PC-9 (cell line): ENCODE measurements at regions of chr16 and their contacts with region 1.

Region 1: DNA sequence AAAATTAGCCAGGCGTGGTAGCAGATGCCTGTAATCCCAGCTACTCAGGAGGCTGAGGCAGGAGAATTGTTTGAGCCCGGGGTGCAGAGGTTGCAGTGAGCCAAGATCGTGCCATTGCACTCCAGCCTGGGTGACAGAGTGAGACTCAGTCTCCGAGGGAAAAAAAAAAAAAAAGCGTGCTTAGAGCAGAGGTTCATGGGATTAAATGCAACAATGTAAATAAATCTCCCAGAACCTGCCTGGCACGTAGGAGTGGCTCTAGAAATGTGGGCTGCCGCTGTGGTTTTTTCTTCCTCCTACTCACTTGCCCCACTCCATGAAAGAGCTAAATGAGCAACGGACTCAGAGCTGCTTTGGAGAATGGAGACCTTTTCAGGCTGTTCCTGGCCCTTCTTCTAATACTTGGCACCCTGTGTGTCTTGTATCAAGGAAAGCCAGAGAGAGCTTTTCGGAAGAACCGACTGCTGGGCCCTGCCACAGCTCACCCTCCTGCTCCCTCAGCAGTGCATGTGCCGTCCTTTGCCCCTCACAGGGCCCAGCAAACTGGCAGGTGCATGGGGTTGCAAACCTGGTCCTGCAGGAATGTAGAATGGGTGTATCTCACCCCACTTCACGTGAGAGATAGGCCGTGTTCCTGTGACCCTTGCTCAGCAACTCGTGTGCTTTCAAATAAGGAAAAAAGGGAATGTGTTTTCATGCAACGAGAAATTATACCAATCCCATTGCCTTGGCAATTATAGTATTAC is 52.0 kb downstream of the LDHD start:
- DNase-seq: peak; percentile 63 to 91
- H3K4me3 ChIP-seq: peak overlapping the region; percentile 52
- H3K27ac ChIP-seq: peak overlapping the region; percentile 86
- H3K4me1 ChIP-seq: peaks cover 72% of the 10 kb centered on the region
- H3K27me3 ChIP-seq: no peaks in the 10 kb centered on the region
- CTCF ChIP-seq: no peak

Region 2: GRCh38 chr16:74998481-74999218 is 65.9 kb before region 1 on chr16 and contains the start of gene ZNRF1:
- CTCF ChIA-PET with region 1: interaction called, 8 read pairs
- POLR2A ChIA-PET with region 1: no interaction called
- intact Hi-C with region 1: loop called (anchors 1 kb)
- DNase-seq: peak; percentile 82 to 87
- H3K4me3 ChIP-seq: peak within 1 kb of the TSS; percentile 74
- H3K27ac ChIP-seq: peak within 1 kb of the TSS; percentile 86
- H3K4me1 ChIP-seq: peaks cover 52% of the 10 kb centered on the region
- H3K27me3 ChIP-seq: no peaks in the 10 kb centered on the region
- CTCF ChIP-seq: peak; percentile 94
- total RNA-seq, gene ZNRF1: 64.4 and 79.3 TPM in 2 replicates

Region 3: DNA sequence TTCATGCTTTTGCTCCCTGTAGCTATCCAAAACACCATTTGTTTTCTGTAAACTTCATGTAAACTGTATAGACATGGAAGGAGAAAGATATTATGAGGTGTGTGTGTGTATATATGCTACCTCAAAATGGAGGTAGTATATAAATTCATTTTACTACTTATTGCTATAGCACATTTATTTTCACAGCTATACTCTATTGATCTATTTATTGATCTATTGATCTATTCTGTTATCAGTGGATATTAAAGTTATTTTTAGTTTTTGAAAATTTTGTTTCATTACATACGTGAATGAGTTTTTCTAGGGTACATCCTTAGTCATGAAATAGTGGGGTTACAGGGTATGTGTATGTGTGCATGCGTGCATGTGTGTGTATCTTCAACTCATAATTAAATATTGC is 50.3 kb before region 1 on chr16:
- CTCF ChIA-PET with region 1: no interaction called
- POLR2A ChIA-PET with region 1: no interaction called
- intact Hi-C with region 1: no loop called
- DNase-seq: no peak
- H3K4me3 ChIP-seq: no peak overlapping the region
- H3K27ac ChIP-seq: no peak overlapping the region
- H3K4me1 ChIP-seq: peaks cover 67% of the 10 kb centered on the region
- H3K27me3 ChIP-seq: no peaks in the 10 kb centered on the region
- CTCF ChIP-seq: no peak

Region 4: GRCh38 chr16:75029557-75030253 is 34.9 kb before region 1 on chr16:
- CTCF ChIA-PET with region 1: interaction called, 4 read pairs
- POLR2A ChIA-PET with region 1: interaction called, 11 read pairs
- intact Hi-C with region 1: no loop called
- DNase-seq: peak; percentile 65 to 91
- H3K4me3 ChIP-seq: no peak overlapping the region
- H3K27ac ChIP-seq: peak overlapping the region; percentile 71
- H3K4me1 ChIP-seq: peaks cover 66% of the 10 kb centered on the region
- H3K27me3 ChIP-seq: no peaks in the 10 kb centered on the region
- CTCF ChIP-seq: no peak

Region 5: DNA sequence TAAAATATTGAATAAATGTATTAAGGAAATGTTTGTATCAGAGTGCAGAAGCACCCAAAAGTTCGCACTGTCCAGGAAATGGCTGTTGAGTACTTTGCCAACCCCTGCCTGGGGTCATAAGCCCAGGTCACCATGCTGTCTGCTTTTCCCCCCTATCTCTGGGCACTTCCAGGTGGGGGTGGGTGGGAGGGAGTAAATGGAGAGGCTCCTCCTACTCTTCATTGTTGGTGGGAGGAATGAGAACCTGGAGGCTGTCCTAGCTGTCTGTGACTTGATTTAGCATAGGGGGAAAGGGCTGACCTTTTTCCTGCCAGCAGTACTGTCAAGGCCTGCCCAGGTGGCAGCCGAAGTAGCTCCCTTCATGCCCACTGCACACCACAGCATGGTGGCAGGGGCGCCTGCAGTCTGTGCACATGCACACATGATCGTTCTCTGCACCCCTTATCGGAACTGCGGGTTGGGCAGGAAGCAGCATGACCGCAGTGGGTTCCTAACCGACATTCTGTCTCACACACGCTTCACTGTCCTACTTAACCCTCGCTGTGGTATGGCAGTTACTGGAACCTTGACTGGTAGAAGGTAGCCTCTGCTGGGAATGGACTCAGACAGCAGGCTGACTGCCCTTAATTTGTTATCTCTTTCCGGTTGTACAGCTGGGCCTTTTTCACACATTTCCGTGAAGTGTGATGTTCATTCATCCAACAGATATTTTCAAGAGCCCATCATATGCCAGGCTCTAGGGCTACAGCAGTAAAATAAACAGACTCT is 10.5 kb after region 1 on chr16:
- CTCF ChIA-PET with region 1: interaction called, 12 read pairs
- POLR2A ChIA-PET with region 1: interaction called, 12 read pairs
- intact Hi-C with region 1: no loop called
- DNase-seq: no peak
- H3K4me3 ChIP-seq: no peak overlapping the region
- H3K27ac ChIP-seq: no peak overlapping the region
- H3K4me1 ChIP-seq: peaks cover 8% of the 10 kb centered on the region
- H3K27me3 ChIP-seq: no peaks in the 10 kb centered on the region
- CTCF ChIP-seq: no peak

Region 6: GRCh38 chr16:75086281-75086680 is 21.7 kb after region 1 on chr16:
- CTCF ChIA-PET with region 1: no interaction called
- POLR2A ChIA-PET with region 1: no interaction called
- intact Hi-C with region 1: no loop called
- DNase-seq: no peak
- H3K4me3 ChIP-seq: no peak overlapping the region
- H3K27ac ChIP-seq: no peak overlapping the region
- H3K4me1 ChIP-seq: peaks cover 17% of the 10 kb centered on the region
- H3K27me3 ChIP-seq: no peaks in the 10 kb centered on the region
- CTCF ChIP-seq: no peak

Region 7: GRCh38 chr16:75096663-75097119 is 32.1 kb after region 1 on chr16:
- CTCF ChIA-PET with region 1: interaction called, 6 read pairs
- POLR2A ChIA-PET with region 1: no interaction called
- intact Hi-C with region 1: loop called (anchors 2 kb)
- DNase-seq: peak; percentile 77 to 83
- H3K4me3 ChIP-seq: peak overlapping the region; percentile 26; the same call in 1 of the 2 replicates
- H3K27ac ChIP-seq: peak overlapping the region; percentile 55
- H3K4me1 ChIP-seq: peaks cover 42% of the 10 kb centered on the region
- H3K27me3 ChIP-seq: no peaks in the 10 kb centered on the region
- CTCF ChIP-seq: peak; percentile 80

Region 8: GRCh38 chr16:75143941-75144340 is 79.4 kb after region 1 on chr16:
- CTCF ChIA-PET with region 1: interaction called, 12 read pairs
- POLR2A ChIA-PET with region 1: no interaction called
- intact Hi-C with region 1: no loop called
- DNase-seq: no peak
- H3K4me3 ChIP-seq: no peak overlapping the region
- H3K27ac ChIP-seq: no peak overlapping the region
- H3K4me1 ChIP-seq: no peaks in the 10 kb centered on the region; the same call in 1 of the 2 replicates
- H3K27me3 ChIP-seq: no peaks in the 10 kb centered on the region
- CTCF ChIP-seq: no peak